ENCODE measurements at regions of chr3 and their contacts with region 1.

Region 1: GRCh38 chr3:57852896-57853295 is 96.8 kb downstream of the SLMAP start:
- DNase-seq: no peak
- H3K4me3 ChIP-seq: no peak overlapping the region
- H3K27ac ChIP-seq: no peak overlapping the region
- H3K27me3 ChIP-seq: no peaks in the 10 kb centered on the region
- CTCF ChIP-seq: peak; percentile 47

Region 2: DNA sequence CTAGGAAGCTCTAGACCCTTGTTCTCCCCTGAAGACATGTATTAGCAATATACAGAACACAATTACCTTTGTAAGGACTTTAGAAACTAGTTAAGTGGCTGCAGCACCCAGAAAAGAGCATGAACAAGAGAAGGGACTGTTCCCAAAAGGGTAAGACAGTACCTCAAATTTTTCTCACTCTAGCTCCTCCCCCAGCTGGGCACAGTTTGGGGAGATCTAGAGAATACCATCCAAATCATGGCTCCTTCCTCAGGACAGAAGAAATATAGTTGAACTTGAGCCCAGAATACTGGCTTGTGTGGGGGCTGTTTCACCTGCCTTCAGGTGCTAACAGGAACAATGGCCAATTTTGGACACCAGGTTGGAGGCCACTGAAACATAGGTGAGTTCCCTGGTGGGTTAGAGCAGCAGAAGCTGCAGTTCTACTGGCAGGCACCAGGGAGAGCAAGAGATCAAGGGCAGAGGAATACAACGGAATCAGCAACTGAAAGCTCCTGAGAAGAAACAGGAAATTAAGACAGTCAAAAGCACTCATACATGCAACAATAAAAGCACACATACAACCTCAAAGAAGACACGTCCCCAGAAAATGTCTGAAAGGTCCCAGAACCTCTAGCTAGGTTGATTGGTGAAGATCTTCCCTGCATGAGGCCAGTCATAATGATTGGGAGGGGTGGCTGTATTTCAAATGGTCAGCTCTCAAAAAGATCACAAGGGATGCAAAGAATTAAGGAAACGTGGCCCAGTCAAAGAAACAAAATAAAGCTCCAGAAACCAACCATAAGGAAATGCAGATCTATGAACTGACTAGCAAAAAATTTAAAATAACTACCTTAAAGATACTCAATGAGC is 455.5 kb before region 1 on chr3:
- CTCF ChIA-PET with region 1: interaction called, 40 read pairs
- POLR2A ChIA-PET with region 1: no interaction called
- DNase-seq: no peak
- H3K4me3 ChIP-seq: no peak overlapping the region
- H3K27ac ChIP-seq: no peak overlapping the region
- H3K27me3 ChIP-seq: no peaks in the 10 kb centered on the region
- CTCF ChIP-seq: peak; percentile 93

Region 3: GRCh38 chr3:57840473-57840872 is 12.4 kb before region 1 on chr3:
- CTCF ChIA-PET with region 1: interaction called, 10 read pairs
- POLR2A ChIA-PET with region 1: no interaction called
- DNase-seq: no peak
- H3K4me3 ChIP-seq: no peak overlapping the region
- H3K27ac ChIP-seq: no peak overlapping the region
- H3K27me3 ChIP-seq: no peaks in the 10 kb centered on the region
- CTCF ChIP-seq: no peak

Region 4: DNA sequence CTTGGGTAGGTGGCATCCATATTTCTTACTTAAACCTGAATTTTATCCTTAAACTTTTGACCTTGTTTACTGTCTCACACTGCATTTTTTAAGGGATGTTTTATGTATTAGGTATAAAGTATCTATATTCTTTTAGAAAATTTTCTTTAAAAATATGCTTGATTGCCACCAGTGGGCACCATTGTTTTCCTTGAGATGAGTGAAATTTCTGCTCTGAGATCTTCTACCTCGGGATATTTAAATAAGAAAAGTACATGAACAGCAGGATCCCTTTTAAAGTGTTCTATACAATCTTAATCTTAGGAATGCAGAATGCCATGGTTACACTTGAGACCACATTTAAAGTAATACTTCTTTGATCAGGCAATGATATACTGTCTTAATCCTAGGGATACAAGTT is 12.0 kb after region 1 on chr3:
- CTCF ChIA-PET with region 1: interaction called, 14 read pairs
- POLR2A ChIA-PET with region 1: no interaction called
- DNase-seq: no peak
- H3K4me3 ChIP-seq: no peak overlapping the region
- H3K27ac ChIP-seq: no peak overlapping the region
- H3K27me3 ChIP-seq: no peaks in the 10 kb centered on the region
- CTCF ChIP-seq: peak; percentile 68

Measured in AG04450 (cell line).